ENCODE measurements at regions of chr17 and their contacts with region 1.

Region 1: GRCh38 chr17:42388381-42389134 is at the start of gene STAT3:
- DNase-seq: peak; percentile 98
- CTCF ChIP-seq: no peak

Region 2: DNA sequence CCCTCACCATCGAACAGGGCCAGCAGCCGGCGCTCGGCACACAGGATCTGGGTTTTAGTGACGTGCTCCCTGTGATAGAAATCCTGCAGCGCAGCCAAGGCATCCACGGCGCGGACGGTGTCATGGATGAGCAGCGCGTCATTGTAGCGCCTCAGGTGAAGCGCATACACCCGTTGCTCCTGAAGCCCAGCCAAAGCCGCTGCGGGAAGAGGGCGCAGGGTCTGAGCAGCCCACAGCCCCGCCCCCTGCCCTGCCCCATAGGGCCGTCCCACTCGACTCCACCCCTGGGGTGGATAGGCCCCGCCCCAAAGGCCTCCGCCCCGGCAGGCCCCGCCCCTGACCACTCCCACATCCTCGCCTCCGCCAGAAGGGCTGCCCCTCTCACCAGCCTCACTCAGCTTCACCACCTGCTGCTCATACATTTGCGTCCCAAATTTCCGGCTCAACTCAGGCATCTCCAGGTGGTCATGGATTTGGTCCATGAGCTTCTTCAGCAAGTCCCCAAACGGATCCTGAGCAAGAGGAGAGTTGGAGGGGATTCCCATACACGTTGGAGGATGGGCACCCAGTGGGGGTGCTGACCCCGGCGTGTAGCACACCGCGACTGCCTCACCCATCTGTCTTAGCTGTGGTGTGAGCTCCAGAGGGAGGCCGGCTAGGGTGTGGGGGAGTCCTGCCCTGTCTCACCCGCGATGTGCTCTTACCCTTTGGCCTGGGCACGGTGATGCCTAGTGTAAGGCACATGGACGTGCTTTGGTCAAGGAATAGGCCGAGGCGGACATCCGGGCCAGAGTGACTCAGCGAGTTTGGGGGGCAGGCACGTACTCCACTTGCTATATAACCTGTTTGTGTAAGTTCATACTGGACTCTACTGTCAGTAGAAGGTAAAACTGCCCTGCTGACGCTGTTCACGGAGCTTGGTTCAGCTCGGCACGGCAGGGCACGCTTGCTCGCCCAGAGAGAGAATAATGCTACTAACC is 280.7 kb before region 1 on chr17:
- CTCF ChIA-PET with region 1: no interaction called
- POLR2A ChIA-PET with region 1: no interaction called
- DNase-seq: peak; percentile 98
- CTCF ChIP-seq: no peak

Region 3: GRCh38 chr17:42142371-42142896 is 246.1 kb before region 1 on chr17:
- CTCF ChIA-PET with region 1: no interaction called
- POLR2A ChIA-PET with region 1: no interaction called
- DNase-seq: no peak
- CTCF ChIP-seq: no peak

Region 4: GRCh38 chr17:42266918-42267778 is 121.4 kb before region 1 on chr17:
- CTCF ChIA-PET with region 1: no interaction called
- POLR2A ChIA-PET with region 1: no interaction called
- DNase-seq: no peak
- CTCF ChIP-seq: no peak

Region 5: GRCh38 chr17:42399948-42400843 is 11.6 kb after region 1 on chr17:
- CTCF ChIA-PET with region 1: interaction called, 32 read pairs
- POLR2A ChIA-PET with region 1: interaction called, 5 read pairs
- DNase-seq: no peak
- CTCF ChIP-seq: no peak

Region 6: DNA sequence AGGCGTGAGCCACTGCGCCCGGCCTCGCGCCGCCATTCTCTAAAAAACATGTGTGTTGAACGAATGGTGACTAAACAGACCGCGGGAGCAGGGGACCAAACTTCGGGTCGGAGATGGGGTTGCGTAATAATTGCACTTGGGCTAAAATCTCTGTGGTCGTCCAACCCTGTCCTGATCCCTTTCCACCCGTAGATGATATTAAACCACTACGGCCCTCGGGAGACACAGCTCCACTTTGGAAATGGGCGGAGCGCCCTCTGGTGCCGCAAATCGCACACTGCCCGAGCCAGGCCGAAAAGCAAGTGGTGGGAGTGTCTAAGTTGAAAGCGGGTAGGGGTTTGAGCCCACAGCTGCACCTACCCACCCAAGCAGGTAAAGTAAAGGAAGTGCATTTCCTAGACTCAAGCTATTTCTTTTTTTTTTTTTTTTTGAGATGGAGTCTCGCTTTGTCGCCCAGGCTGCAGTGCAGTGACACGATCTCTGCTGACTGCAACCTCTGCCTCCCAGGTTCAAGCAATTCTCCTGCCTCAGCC is 17.5 kb after region 1 on chr17:
- CTCF ChIA-PET with region 1: interaction called, 32 read pairs
- POLR2A ChIA-PET with region 1: interaction called, 5 read pairs
- DNase-seq: peak; percentile 82
- CTCF ChIP-seq: peak; percentile 95

Region 7: GRCh38 chr17:42438600-42439567 is 50.3 kb after region 1 on chr17:
- CTCF ChIA-PET with region 1: no interaction called
- POLR2A ChIA-PET with region 1: no interaction called
- DNase-seq: no peak
- CTCF ChIP-seq: peak; percentile 50

Region 8: GRCh38 chr17:42459256-42459800 is 70.8 kb after region 1 on chr17:
- CTCF ChIA-PET with region 1: no interaction called
- POLR2A ChIA-PET with region 1: interaction called, 10 read pairs
- DNase-seq: no peak
- CTCF ChIP-seq: peak; percentile 52

Measured in GM10248 (cell line).